B cell (primary cell): ENCODE measurements at regions of chr5 and their contacts with region 1.

Region 1: DNA sequence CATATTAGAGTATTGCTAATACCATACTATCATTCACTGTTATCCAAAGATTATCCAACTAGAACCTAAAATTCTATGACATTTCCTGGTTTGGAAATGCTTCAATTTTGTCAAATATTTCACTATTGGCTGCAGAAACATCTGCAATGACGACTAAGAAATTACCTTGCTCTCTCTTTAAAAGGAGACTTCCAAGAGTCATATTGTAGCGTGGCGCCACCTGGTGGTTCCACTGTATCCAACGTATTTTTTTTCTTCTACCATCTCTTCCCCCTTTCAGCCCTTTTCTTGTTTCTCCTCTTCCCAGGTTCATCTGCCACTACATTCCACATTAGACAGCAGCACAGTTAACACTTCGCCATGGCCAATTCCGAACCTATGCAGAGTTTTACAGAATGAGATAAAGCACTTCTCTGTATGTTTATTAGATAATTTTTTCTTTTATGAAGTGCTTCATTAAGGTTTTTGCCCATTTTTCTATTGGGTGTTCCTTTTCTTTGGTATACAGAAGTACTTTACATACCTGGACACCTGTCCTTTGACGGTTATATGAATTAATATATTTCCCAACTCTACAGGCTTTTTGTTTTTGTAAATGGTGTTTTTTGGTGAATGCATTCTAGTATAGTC is 153.5 kb downstream of the CDC42SE2 start:
- DNase-seq: peak; percentile 82
- ATAC-seq: peak; percentile 63
- H3K4me3 ChIP-seq: peak overlapping the region in 1 of 5 experiments; percentile 43
- H3K4me3 Mint-ChIP-seq: peak overlapping the region; percentile 54
- H3K27ac ChIP-seq: no peak overlapping the region
- H3K27ac Mint-ChIP-seq: no peak overlapping the region
- H3K4me1 ChIP-seq: peaks cover 18 to 19% of the 10 kb centered on the region in 2 donors
- H3K4me1 Mint-ChIP-seq: peaks cover 32% of the 10 kb centered on the region
- H3K27me3 ChIP-seq: no peaks in the 10 kb centered on the region
- H3K27me3 Mint-ChIP-seq: no peaks in the 10 kb centered on the region
- CTCF ChIP-seq: peak; percentile 97

Region 2: DNA sequence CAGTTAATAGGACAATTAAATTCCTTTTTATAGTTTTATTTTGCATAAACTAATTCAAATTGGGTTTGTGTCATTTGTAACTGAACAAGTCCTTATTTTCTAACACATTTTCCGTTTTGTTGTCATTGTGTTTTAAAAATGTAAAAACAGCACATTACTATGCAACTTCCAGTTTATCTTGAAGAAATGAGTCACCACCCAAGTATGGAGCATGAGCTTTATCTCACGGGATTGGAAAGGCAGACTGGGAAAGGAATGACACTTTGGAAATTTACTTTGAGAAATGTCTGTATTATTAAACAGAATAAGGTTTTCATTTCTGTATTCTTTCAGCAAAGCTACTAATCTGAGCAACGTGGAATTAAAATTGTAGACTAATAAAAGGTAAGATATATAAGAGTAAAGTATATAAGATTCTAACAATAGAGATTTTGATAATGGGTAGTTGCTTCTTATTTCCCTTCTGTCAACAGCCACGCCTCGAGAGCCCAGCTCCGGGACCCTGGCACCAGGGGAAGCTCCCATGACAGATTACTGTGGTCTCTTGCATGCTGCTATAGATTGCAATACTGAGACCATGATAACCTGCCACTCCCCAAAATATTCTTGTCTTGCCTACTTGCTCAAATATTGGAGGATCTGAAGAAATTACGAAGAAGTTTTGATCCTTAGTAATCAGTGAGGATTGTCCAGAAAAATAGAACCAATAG is 1080.0 kb before region 1 on chr5:
- CTCF ChIA-PET with region 1: no interaction called
- POLR2A ChIA-PET with region 1: no interaction called
- intact Hi-C with region 1: loop called (anchors 10 kb)
- DNase-seq: no peak
- ATAC-seq: no peak
- H3K4me3 ChIP-seq: no peak overlapping the region
- H3K4me3 Mint-ChIP-seq: no peak overlapping the region
- H3K27ac ChIP-seq: no peak overlapping the region
- H3K27ac Mint-ChIP-seq: no peak overlapping the region
- H3K4me1 ChIP-seq: no peaks in the 10 kb centered on the region
- H3K4me1 Mint-ChIP-seq: no peaks in the 10 kb centered on the region
- H3K27me3 ChIP-seq: no peaks in the 10 kb centered on the region
- H3K27me3 Mint-ChIP-seq: no peaks in the 10 kb centered on the region
- CTCF ChIP-seq: no peak

Region 3: GRCh38 chr5:131165119-131165727 is 252.1 kb before region 1 on chr5 and contains the start of gene HINT1:
- CTCF ChIA-PET with region 1: interaction called, 10 read pairs
- POLR2A ChIA-PET with region 1: no interaction called
- intact Hi-C with region 1: loop called (anchors 1 kb)
- DNase-seq: peak; percentile 96
- ATAC-seq: peak; percentile 80
- H3K4me3 ChIP-seq: peak within 1 kb of the TSS; percentile 69 to 96 (median 94)
- H3K4me3 Mint-ChIP-seq: peak within 1 kb of the TSS; percentile 90
- H3K27ac ChIP-seq: peak within 1 kb of the TSS; percentile 82 to 92
- H3K27ac Mint-ChIP-seq: peak within 1 kb of the TSS; percentile 98
- H3K4me1 ChIP-seq: peaks cover 20 to 23% of the 10 kb centered on the region in 2 donors
- H3K4me1 Mint-ChIP-seq: peaks cover 41% of the 10 kb centered on the region
- H3K27me3 ChIP-seq: no peaks in the 10 kb centered on the region
- H3K27me3 Mint-ChIP-seq: no peaks in the 10 kb centered on the region
- CTCF ChIP-seq: no peak
- total RNA-seq, gene HINT1: 180 and 206 TPM in 2 replicates

Region 4: DNA sequence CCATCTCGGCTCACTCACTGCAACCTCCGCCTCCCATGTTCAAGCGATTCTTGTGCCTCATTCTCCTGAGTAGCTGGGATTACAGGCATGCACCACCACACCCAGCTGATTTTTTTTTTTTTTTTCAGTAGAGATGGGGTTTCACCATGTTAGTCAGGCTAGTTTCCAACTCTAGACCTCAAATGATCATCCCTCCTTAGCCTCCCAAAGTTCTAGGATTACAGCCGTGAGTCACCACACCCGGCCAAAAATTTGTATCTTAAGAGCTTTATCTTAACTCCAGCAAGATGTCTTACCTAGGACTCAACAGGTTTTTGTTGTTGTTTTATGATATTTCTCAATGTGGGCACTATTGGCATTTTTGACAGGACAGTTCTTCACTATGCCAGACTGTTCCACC is 218.7 kb before region 1 on chr5:
- CTCF ChIA-PET with region 1: no interaction called
- POLR2A ChIA-PET with region 1: no interaction called
- intact Hi-C with region 1: no loop called
- DNase-seq: no peak
- ATAC-seq: no peak
- H3K4me3 ChIP-seq: no peak overlapping the region
- H3K4me3 Mint-ChIP-seq: no peak overlapping the region
- H3K27ac ChIP-seq: no peak overlapping the region
- H3K27ac Mint-ChIP-seq: no peak overlapping the region
- H3K4me1 ChIP-seq: no peaks in the 10 kb centered on the region
- H3K4me1 Mint-ChIP-seq: peaks cover 2% of the 10 kb centered on the region
- H3K27me3 ChIP-seq: no peaks in the 10 kb centered on the region
- H3K27me3 Mint-ChIP-seq: no peaks in the 10 kb centered on the region
- CTCF ChIP-seq: no peak